ENCODE measurements at regions of chr1 and their contacts with region 1.

Region 1: GRCh38 chr1:234918181-234918841 is 210.3 kb downstream of the TOMM20 start:
- DNase-seq: peak; percentile 61
- ATAC-seq: peak; percentile 15 to 60

Region 2: GRCh38 chr1:234968451-234968850 is 50.1 kb after region 1 on chr1:
- intact Hi-C with region 1: no loop called
- DNase-seq: no peak
- ATAC-seq: no peak

Region 3: DNA sequence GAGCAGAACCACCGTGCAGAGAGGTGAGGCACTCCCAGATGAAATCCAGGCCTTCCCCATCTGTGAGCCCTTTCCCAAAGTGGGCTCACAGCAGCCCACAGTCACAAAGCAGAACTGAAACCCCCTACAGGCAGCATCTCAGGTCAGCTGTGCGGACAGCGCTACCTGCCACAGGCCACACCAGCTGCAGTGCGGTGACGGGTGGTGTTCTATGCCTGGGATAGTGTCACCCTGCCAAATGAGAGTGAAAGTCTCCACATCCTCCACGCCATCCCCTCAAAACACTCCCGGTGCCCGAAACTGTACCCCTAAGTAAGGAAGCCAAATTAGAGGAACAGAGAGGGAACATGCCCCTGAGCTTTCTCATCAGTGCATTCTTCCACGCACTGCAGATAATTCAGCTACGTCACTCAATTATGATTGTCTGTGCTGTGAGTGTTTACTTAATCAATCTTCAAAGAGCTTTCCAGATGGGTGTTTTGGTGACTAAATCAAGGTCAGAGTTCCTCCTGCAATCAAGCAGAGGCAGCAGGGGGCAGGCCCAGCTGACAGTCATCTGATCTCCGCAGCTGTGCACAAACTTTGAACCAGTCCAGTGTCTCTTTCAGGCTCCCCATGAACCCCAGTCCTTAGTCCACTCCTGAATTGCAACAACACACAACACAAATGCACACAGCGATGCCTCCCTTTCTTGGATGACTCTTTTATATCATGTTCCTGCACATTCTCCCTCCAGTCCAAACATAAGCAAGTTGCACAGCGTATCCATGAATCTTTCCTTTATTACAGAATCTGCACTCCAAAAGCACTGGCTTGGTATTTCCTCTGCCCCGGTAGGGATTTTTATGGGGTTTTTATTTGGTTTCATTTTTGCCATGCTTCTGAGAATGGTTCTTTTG is 60.3 kb after region 1 on chr1:
- intact Hi-C with region 1: loop called in 1 of 2 experiments (anchors 5 kb)
- DNase-seq: peak; percentile 58
- ATAC-seq: peak; percentile 35 to 43

Region 4: DNA sequence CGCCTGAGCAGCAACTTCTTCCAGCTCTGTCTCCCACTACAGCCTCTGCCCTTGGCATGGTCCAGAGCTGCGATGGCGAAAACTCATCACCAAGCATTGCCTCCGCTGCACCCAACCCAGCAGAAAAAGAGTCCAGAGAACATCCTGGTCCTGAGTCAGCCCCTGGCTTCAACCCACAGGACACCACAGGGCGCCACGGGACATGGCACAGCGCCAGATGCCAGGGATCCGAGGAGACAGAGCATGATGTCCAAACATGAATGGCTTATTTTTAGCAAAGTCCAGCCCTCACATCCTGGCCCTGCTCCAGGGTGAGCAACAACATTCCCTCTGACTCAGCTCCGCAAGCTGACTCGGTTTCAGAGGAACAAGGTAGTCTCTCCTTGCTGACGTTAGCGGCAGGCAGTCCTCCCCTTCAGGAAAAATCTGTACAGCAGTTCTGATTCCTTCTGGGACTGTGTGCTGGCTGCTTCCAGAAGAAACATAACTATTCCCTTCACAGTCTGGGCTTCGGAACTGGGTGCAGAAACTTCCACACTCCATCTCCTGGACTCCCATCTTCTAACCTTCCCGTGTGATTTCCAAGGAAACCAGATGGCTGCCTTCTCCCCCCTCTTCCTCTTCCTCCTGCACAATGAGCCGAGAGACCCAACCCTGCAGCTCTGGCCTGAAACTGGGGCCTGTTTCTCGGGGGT is 79.0 kb after region 1 on chr1:
- intact Hi-C with region 1: loop called in 1 of 2 experiments (anchors 5 kb)
- DNase-seq: peak; percentile 99
- ATAC-seq: peak; percentile 95 to 96